GM12878 (cell line): ENCODE measurements at regions of chr3 and their contacts with region 1.

Region 1: DNA sequence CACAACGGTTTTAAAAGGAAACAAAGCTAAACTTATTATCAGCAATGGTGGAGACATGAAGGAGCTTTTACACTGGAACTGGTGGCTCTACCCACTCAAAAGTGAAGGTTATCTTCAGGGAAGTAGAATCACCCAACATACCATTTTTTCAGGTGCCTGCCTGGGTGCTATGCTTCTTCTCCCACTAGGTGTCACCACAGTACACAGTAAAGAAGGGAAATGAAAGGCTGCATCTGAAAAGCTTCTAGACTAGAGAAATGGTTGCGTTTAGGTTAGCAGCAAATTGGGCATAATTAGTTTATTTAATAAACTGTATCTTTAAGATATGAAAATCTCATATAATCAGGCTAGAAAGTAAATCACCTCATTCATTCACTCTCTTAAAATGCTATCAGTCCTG is 47.0 kb upstream of the SELENOK start:
- DNase-seq: no peak
- ATAC-seq: peak; percentile 87
- H3K4me3 ChIP-seq: no peak overlapping the region
- H3K27ac ChIP-seq: no peak overlapping the region
- H3K4me1 ChIP-seq: no peaks in the 10 kb centered on the region
- H3K27me3 ChIP-seq: no peaks in the 10 kb centered on the region; a peak in 1 of 4 replicates
- CTCF ChIP-seq: peak; percentile 74 to 81 (median 78)
- EP300 ChIP-seq: no peak
- POLR2A ChIP-seq: no peak
- RAD21 ChIP-seq: peak; percentile 82

Region 2: GRCh38 chr3:53921296-53921695 is 17.3 kb before region 1 on chr3:
- CTCF ChIA-PET with region 1: interaction called, 11 read pairs
- POLR2A ChIA-PET with region 1: no interaction called
- RAD21 ChIA-PET with region 1: no interaction called
- SMC1A ChIA-PET with region 1: interaction called, 3 read pairs
- in situ Hi-C with region 1: no loop called
- intact Hi-C with region 1: no loop called
- DNase-seq: no peak
- ATAC-seq: peak; percentile 81
- H3K4me3 ChIP-seq: no peak overlapping the region
- H3K27ac ChIP-seq: no peak overlapping the region
- H3K4me1 ChIP-seq: no peaks in the 10 kb centered on the region
- H3K27me3 ChIP-seq: no peaks in the 10 kb centered on the region
- CTCF ChIP-seq: peak; percentile 51 to 58 (median 56); a peak in 5 of 6 replicates
- EP300 ChIP-seq: no peak
- POLR2A ChIP-seq: no peak
- RAD21 ChIP-seq: peak; percentile 50

Region 3: DNA sequence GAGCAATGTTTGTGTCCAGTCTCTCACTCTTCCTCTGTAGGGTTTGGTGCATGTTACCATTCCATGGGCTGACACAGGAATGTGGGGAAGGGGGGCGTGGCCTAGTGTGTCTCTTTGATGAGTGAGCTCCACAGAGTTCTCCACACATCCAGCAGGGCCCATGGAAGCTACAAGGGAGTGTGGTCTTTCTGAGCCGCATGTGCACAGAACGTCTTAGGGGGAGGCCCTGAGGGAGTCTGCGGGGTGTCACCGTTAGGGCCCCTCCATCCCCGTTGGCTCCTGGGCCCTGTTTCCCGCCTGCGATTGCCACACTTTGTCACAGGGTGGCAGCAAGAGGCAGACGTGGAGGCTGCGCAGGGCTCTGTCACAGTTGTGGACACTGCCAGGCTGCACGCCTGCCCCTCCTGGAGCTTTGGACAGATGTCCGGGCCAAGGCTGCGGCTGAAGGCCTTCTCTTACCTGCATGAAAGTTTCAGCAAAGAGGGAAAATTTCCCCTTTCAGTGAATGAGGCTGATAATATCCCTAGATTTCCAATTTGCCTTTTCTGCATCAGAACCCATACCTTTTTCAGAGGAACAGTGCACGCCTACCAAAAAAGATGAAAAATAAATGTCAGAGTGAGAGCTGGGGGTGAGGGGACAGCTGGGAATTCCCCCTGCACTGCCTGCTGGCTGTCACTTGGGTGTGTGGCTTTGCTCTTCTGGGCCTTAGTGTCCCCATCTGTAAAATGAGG is 208.0 kb after region 1 on chr3:
- CTCF ChIA-PET with region 1: interaction called, 3 read pairs
- POLR2A ChIA-PET with region 1: no interaction called
- RAD21 ChIA-PET with region 1: interaction called, 3 read pairs
- SMC1A ChIA-PET with region 1: no interaction called
- in situ Hi-C with region 1: no loop called
- intact Hi-C with region 1: loop called (anchors 10 kb)
- DNase-seq: no peak
- ATAC-seq: peak; percentile 90
- H3K4me3 ChIP-seq: no peak overlapping the region
- H3K27ac ChIP-seq: no peak overlapping the region
- H3K4me1 ChIP-seq: no peaks in the 10 kb centered on the region
- H3K27me3 ChIP-seq: no peaks in the 10 kb centered on the region
- CTCF ChIP-seq: peak; percentile 36 to 50 (median 49); a peak in 5 of 6 replicates
- EP300 ChIP-seq: no peak
- POLR2A ChIP-seq: no peak
- RAD21 ChIP-seq: peak; percentile 45; the same call in 1 of the 2 replicates

Region 4: GRCh38 chr3:54366839-54367238 is 428.2 kb after region 1 on chr3:
- CTCF ChIA-PET with region 1: no interaction called
- POLR2A ChIA-PET with region 1: no interaction called
- RAD21 ChIA-PET with region 1: no interaction called
- SMC1A ChIA-PET with region 1: no interaction called
- in situ Hi-C with region 1: loop called (anchors 5 kb)
- intact Hi-C with region 1: loop called (anchors 5 kb)
- DNase-seq: no peak
- ATAC-seq: no peak
- H3K4me3 ChIP-seq: no peak overlapping the region
- H3K27ac ChIP-seq: no peak overlapping the region
- H3K4me1 ChIP-seq: no peaks in the 10 kb centered on the region
- H3K27me3 ChIP-seq: peaks cover 1 to 3% of the 10 kb centered on the region in 2 experiments; a peak in 2 of 4 replicates
- CTCF ChIP-seq: no peak
- EP300 ChIP-seq: no peak
- POLR2A ChIP-seq: no peak
- RAD21 ChIP-seq: no peak

Region 5: GRCh38 chr3:54374214-54374855 is 435.7 kb after region 1 on chr3:
- CTCF ChIA-PET with region 1: interaction called, 17 read pairs
- POLR2A ChIA-PET with region 1: no interaction called
- RAD21 ChIA-PET with region 1: interaction called, 5 read pairs
- SMC1A ChIA-PET with region 1: interaction called, 10 read pairs
- in situ Hi-C with region 1: loop called (anchors 5 kb)
- intact Hi-C with region 1: loop called (anchors 5 kb)
- DNase-seq: no peak
- ATAC-seq: peak; percentile 74
- H3K4me3 ChIP-seq: no peak overlapping the region
- H3K27ac ChIP-seq: no peak overlapping the region
- H3K4me1 ChIP-seq: no peaks in the 10 kb centered on the region
- H3K27me3 ChIP-seq: peaks cover 0 to under 1% of the 10 kb centered on the region in 2 experiments; a peak in 2 of 4 replicates
- CTCF ChIP-seq: peak; percentile 34 to 48 (median 43); a peak in 4 of 6 replicates
- EP300 ChIP-seq: no peak
- POLR2A ChIP-seq: no peak
- RAD21 ChIP-seq: peak; percentile 52

Region 6: DNA sequence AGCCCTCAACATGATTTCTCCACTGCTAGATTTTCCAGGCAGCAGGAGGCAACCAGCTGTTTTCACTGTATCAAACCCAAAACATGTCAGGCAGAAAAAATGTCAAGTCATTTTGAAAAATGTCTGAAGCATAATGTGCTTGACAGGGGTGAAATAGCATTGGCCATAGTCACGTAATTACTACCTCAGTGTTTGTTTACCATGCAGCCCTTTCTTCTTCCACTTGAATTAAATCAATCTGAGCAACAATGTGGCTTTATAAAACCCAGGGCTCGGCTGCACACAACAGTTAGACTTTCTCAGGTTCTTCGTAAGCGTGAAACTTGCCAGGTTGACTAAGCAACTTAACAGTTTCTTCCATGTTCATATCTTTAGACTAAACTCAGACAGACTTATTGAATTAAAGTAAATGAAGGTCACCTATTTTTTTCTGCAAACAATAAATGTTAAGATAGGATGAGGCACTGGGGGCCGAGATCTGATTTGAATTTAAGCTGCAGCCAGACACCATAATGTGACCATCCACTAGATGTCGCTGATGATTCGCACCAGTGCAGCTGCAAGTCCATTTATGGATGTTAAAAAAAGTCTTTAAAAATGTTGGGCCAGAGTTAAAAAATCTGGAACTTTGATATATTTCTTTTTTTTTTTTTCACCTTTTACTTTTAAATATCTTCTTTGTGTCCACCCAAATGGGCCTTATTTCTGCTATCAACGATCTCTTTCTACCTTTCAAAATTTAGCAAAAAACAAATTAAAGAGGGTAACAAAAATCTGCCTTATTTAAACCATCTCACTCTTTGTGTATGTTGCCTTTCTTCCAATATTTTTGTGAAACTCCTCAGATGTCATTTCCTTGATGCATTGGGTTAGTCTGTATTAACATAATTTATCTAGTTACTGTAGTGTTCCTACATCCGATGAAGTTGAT is 489.6 kb after region 1 on chr3:
- CTCF ChIA-PET with region 1: interaction called, 6 read pairs
- POLR2A ChIA-PET with region 1: no interaction called
- RAD21 ChIA-PET with region 1: no interaction called
- SMC1A ChIA-PET with region 1: no interaction called
- in situ Hi-C with region 1: no loop called
- intact Hi-C with region 1: loop called (anchors 2 kb)
- DNase-seq: peak; percentile 7
- ATAC-seq: peak; percentile 71
- H3K4me3 ChIP-seq: no peak overlapping the region
- H3K27ac ChIP-seq: no peak overlapping the region
- H3K4me1 ChIP-seq: no peaks in the 10 kb centered on the region
- H3K27me3 ChIP-seq: no peaks in the 10 kb centered on the region; a peak in 1 of 4 replicates
- CTCF ChIP-seq: peak; percentile 76 to 86 (median 82)
- EP300 ChIP-seq: no peak
- POLR2A ChIP-seq: no peak
- RAD21 ChIP-seq: peak; percentile 79